Activated CD4-positive, alpha-beta T cell treated with anti-CD3 and anti-CD28 coated beads, Interleukin-2, amount 10 ng/mL, durations not matched to agents 24 days and 14 days (primary cell): ENCODE measurements at regions of chr14 and their contacts with region 1.

Region 1: DNA sequence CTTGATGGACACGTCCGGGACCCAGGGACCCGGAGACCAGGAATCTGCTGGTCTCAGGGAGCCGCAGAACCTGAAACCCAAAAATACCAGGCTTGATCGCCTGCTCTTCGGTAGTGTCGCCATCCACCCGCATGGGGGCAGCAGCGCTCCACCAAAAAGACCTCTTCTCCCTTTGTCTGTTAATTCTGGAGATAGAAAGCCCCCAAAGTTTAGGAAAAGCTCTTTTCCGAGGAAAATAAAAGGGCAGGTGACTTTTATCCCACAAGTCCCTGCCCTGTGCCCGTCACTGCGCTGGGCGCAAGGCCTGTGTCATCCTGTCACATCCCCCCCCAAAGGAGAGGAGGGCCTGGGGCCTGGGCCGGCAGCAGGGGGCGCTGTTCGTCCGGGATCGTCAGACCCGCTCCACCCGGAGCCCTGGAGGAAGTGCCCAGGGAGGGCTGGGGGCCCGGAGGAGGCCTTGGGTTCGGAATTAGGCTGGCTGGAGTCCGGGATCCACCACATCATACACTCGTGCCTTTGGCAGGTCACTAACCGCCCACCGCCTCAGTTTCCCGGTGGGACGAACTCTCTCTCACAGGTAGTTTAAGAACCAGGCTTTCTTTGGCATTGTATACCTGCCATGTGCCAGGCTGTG is 31.9 kb downstream of the DAD1 start:
- DNase-seq: peak; percentile 97
- H3K4me3 Mint-ChIP-seq: peak overlapping the region; percentile 90
- H3K27ac Mint-ChIP-seq: peak overlapping the region; percentile 97
- H3K4me1 Mint-ChIP-seq: peaks cover 86% of the 10 kb centered on the region
- H3K27me3 Mint-ChIP-seq: peaks cover 4% of the 10 kb centered on the region

Region 2: GRCh38 chr14:21269252-21270046 is 1287.7 kb before region 1 on chr14 and contains the start of gene HNRNPC:
- intact Hi-C with region 1: loop called (anchors 10 kb)
- DNase-seq: peak; percentile 100
- H3K4me3 Mint-ChIP-seq: peak within 1 kb of the TSS; percentile 92
- H3K27ac Mint-ChIP-seq: peak within 1 kb of the TSS; percentile 100
- H3K4me1 Mint-ChIP-seq: peaks cover 30% of the 10 kb centered on the region
- H3K27me3 Mint-ChIP-seq: no peaks in the 10 kb centered on the region
- total RNA-seq, gene HNRNPC: 1,009 and 1,054 TPM in 2 replicates

Region 3: DNA sequence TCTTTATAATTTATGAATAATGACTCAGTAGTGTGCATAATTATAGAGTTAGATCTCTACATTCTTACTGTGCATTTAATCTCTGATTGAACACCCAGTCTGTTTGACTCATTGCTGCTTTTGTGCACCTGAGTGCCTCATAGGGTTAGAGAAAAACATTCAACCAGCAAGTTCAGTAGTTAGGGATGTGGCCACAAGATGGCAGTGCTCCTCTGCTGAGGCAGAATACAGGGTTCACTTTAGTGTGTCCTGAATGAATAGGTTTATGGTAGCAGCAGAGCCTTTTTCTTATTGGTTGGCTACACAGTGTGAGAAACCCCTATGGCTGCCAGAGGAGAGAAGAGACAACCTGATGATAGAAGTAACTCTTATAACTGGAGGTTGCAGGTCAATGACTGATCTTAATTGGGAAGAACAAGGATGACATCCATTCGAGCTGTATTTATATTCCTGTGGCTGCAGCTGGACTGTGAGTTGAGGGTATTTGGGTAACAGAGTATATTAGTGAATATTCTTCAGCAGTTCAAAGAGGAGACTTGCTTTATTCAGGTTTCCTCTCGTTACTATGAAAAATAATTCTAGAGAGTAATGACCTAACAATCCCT is 688.6 kb before region 1 on chr14:
- intact Hi-C with region 1: loop called (anchors 5 kb)
- DNase-seq: peak; percentile 94
- H3K4me3 Mint-ChIP-seq: peak overlapping the region; percentile 67
- H3K27ac Mint-ChIP-seq: peak overlapping the region; percentile 69
- H3K4me1 Mint-ChIP-seq: peaks cover 22% of the 10 kb centered on the region
- H3K27me3 Mint-ChIP-seq: peaks cover 4% of the 10 kb centered on the region

Region 4: GRCh38 chr14:22122227-22122818 is 434.8 kb before region 1 on chr14:
- intact Hi-C with region 1: loop called (anchors 5 kb)
- DNase-seq: peak; percentile 72
- H3K4me3 Mint-ChIP-seq: peak overlapping the region; percentile 83
- H3K27ac Mint-ChIP-seq: peak overlapping the region; percentile 84
- H3K4me1 Mint-ChIP-seq: peaks cover 16% of the 10 kb centered on the region
- H3K27me3 Mint-ChIP-seq: peaks cover 4% of the 10 kb centered on the region

Region 5: GRCh38 chr14:22448905-22449599 is 108.1 kb before region 1 on chr14:
- intact Hi-C with region 1: no loop called
- DNase-seq: no peak
- H3K4me3 Mint-ChIP-seq: no peak overlapping the region
- H3K27ac Mint-ChIP-seq: no peak overlapping the region
- H3K4me1 Mint-ChIP-seq: no peaks in the 10 kb centered on the region
- H3K27me3 Mint-ChIP-seq: no peaks in the 10 kb centered on the region

Region 6: DNA sequence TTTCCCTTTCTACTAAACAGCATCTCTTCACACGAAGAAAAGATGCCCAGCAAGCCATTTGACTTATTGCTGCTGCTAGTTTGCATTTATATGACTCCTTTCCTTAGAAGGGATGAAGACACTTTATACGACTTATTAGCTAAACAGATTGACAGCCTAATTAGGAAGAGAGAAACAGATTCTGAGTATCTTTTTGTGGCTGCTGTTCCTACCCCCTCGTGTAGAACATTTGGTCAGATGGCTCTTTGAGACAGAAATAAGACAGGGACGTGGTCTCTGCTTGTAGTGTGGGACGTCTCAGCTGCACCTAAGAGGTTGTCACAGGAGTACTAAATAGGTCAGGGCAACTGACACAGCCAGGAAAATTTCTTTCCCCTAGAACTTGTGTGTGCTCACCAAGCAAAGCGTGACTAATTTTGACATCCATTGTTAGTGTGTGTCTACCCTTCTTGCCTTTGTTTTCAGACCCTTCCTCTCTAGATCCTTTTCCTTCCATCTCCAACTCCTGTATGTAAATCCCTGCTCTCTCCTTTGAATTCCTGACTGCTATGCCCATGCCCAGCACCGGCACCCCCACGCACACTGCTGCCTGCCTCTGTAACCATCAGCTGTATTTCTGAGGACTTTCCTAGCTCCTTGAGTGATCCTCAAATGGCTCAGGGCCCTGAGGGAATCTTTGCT is 51.3 kb before region 1 on chr14:
- intact Hi-C with region 1: loop called (anchors 2 kb)
- DNase-seq: peak; percentile 71
- H3K4me3 Mint-ChIP-seq: peak overlapping the region; percentile 87
- H3K27ac Mint-ChIP-seq: peak overlapping the region; percentile 97
- H3K4me1 Mint-ChIP-seq: peaks cover 47% of the 10 kb centered on the region
- H3K27me3 Mint-ChIP-seq: no peaks in the 10 kb centered on the region

Region 7: GRCh38 chr14:22589096-22589839 is 32.2 kb after region 1 on chr14 and contains the start of gene DAD1:
- intact Hi-C with region 1: loop called (anchors 1 kb)
- DNase-seq: peak; percentile 100
- H3K4me3 Mint-ChIP-seq: peak within 1 kb of the TSS; percentile 87
- H3K27ac Mint-ChIP-seq: peak within 1 kb of the TSS; percentile 99
- H3K4me1 Mint-ChIP-seq: peaks cover 49% of the 10 kb centered on the region
- H3K27me3 Mint-ChIP-seq: peaks cover 10% of the 10 kb centered on the region
- total RNA-seq, gene DAD1: 255 and 266 TPM in 2 replicates

Region 8: GRCh38 chr14:22918804-22919600 is 361.9 kb after region 1 on chr14 and contains the start of gene RBM23:
- intact Hi-C with region 1: loop called (anchors 2 kb)
- DNase-seq: peak; percentile 100
- H3K4me3 Mint-ChIP-seq: peak within 1 kb of the TSS; percentile 95
- H3K27ac Mint-ChIP-seq: peak within 1 kb of the TSS; percentile 100
- H3K4me1 Mint-ChIP-seq: peaks cover 27% of the 10 kb centered on the region
- H3K27me3 Mint-ChIP-seq: peaks cover 2% of the 10 kb centered on the region
- total RNA-seq, gene RBM23: 82.7 and 90.2 TPM in 2 replicates